ENCODE measurements at regions of chr9 and their contacts with region 1.

Region 1: GRCh38 chr9:2800393-2801179 is 43.3 kb downstream of the PUM3 start:
- DNase-seq: no peak
- ATAC-seq: peak; percentile 69

Region 2: GRCh38 chr9:2745560-2746380 is 54.8 kb before region 1 on chr9:
- intact Hi-C with region 1: loop called (anchors 10 kb)
- DNase-seq: no peak
- ATAC-seq: no peak